B cell (primary cell): ENCODE measurements at regions of chr11 and their contacts with region 1.

Region 1: GRCh38 chr11:119363851-119364590 is 17.5 kb downstream of the USP2 start:
- DNase-seq: peak; percentile 71
- ATAC-seq: peak; percentile 92
- H3K4me3 ChIP-seq: peak overlapping the region in 3 of 5 experiments; percentile 36 to 58 (median 44)
- H3K4me3 Mint-ChIP-seq: peak overlapping the region; percentile 89
- H3K27ac ChIP-seq: no peak overlapping the region
- H3K27ac Mint-ChIP-seq: no peak overlapping the region
- H3K4me1 ChIP-seq: peaks cover 19 to 21% of the 10 kb centered on the region in 2 donors
- H3K4me1 Mint-ChIP-seq: peaks cover 17% of the 10 kb centered on the region
- H3K27me3 ChIP-seq: peaks cover 0 to 53% (median 27%) of the 10 kb centered on the region in 4 experiments
- H3K27me3 Mint-ChIP-seq: peaks cover 54% of the 10 kb centered on the region
- CTCF ChIP-seq: no peak

Region 2: DNA sequence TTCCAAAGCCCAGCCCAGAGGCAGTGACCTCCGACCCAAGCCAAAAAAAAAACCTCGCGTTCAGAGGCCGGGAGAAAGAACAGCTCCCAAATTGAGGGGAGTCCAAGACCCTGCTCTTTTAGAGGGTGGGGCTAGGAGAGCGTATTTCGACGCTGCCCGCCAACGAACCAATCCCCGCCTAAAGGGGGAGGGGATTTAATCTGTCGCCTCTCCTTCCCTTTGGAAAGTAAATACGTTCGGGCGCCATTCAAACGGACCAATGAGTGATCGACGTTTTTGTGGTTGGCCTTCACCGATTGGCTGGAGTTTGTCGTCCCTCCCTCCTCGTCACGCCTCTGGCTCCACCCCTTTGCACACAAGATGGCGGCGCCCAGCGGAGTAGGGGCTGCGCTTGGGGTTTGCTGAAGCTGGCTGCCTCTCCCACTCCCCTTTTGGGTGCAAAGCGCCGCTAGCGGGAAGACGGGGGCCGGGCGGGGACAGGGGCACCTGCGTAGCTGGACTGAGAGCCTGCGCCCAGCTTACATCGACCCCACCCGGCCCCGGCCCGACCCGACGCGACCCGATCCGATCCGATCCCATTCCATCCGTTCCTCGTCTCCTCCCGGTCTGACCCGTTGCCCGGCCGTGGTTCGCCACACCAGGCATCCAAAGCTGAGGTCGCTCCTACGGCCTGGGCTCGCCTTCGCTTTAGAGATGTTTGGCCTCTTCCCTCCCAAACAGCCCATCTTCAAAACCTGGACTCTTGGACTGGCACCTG is 29.7 kb before region 1 on chr11 and contains the start of gene RNF26:
- CTCF ChIA-PET with region 1: no interaction called
- POLR2A ChIA-PET with region 1: interaction called, 11 read pairs
- intact Hi-C with region 1: no loop called
- DNase-seq: peak; percentile 96
- ATAC-seq: peak; percentile 98
- H3K4me3 ChIP-seq: peak within 1 kb of the TSS; percentile 74 to 94 (median 88)
- H3K4me3 Mint-ChIP-seq: peak within 1 kb of the TSS; percentile 99
- H3K27ac ChIP-seq: peak within 1 kb of the TSS; percentile 59 to 83
- H3K27ac Mint-ChIP-seq: peak within 1 kb of the TSS; percentile 95
- H3K4me1 ChIP-seq: peaks cover 10 to 19% of the 10 kb centered on the region in 2 donors
- H3K4me1 Mint-ChIP-seq: peaks cover 27% of the 10 kb centered on the region
- H3K27me3 ChIP-seq: peaks cover 0 to 11% (median 7%) of the 10 kb centered on the region in 4 experiments
- H3K27me3 Mint-ChIP-seq: peaks cover 16% of the 10 kb centered on the region
- CTCF ChIP-seq: no peak
- total RNA-seq, gene RNF26: 21.3 and 21.8 TPM in 2 replicates

Region 3: DNA sequence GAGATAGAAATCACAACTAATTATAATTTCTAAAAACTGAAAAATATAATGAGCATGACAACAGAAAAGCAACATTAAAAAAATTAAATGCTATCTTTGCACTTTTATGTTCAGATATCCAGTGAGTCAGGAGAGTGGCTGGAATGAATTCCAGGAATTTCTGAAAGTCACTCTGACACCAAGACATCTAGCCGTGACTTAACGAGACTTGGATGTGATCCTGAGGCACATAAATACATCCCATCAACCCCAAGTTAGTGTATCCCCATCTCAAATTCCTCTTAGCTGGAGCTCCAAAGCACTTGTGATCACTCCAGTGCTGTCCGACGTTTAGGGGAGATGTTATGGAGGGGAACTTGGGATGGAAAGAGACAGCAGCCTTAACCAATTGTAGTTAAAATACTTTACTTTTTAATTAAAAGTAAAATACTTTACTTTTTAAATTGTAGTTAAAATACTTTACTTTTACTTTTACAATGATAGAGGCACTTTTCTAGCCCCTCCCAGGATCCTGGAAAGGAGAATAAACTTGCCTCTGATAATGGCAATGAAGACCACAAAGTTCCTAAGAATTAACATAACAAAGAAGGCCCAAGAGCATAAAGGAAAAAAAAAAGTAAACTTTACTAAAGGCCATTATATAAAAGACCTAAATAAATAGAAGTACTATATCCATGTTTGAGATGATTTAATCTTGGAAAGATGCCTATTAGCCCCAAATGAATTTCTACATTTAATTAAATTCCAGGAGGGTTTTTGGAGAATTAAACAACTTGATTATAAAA is 187.9 kb after region 1 on chr11:
- CTCF ChIA-PET with region 1: no interaction called
- POLR2A ChIA-PET with region 1: no interaction called
- intact Hi-C with region 1: no loop called
- DNase-seq: no peak
- ATAC-seq: no peak
- H3K4me3 ChIP-seq: no peak overlapping the region
- H3K4me3 Mint-ChIP-seq: no peak overlapping the region
- H3K27ac ChIP-seq: no peak overlapping the region
- H3K27ac Mint-ChIP-seq: no peak overlapping the region
- H3K4me1 ChIP-seq: no peaks in the 10 kb centered on the region
- H3K4me1 Mint-ChIP-seq: no peaks in the 10 kb centered on the region
- H3K27me3 ChIP-seq: no peaks in the 10 kb centered on the region
- H3K27me3 Mint-ChIP-seq: peaks cover 3% of the 10 kb centered on the region
- CTCF ChIP-seq: no peak